ENCODE measurements at regions of chr6 and their contacts with region 1.

Region 1: GRCh38 chr6:120826253-120826652 is 508.0 kb downstream of the TBC1D32 start:
- DNase-seq: peak; percentile 65
- ATAC-seq: peak; percentile 53
- H3K4me3 ChIP-seq: no peak overlapping the region
- H3K27ac ChIP-seq: no peak overlapping the region
- H3K4me1 ChIP-seq: peaks cover 8% of the 10 kb centered on the region
- H3K27me3 ChIP-seq: no peaks in the 10 kb centered on the region
- CTCF ChIP-seq: peak; percentile 77

Region 2: DNA sequence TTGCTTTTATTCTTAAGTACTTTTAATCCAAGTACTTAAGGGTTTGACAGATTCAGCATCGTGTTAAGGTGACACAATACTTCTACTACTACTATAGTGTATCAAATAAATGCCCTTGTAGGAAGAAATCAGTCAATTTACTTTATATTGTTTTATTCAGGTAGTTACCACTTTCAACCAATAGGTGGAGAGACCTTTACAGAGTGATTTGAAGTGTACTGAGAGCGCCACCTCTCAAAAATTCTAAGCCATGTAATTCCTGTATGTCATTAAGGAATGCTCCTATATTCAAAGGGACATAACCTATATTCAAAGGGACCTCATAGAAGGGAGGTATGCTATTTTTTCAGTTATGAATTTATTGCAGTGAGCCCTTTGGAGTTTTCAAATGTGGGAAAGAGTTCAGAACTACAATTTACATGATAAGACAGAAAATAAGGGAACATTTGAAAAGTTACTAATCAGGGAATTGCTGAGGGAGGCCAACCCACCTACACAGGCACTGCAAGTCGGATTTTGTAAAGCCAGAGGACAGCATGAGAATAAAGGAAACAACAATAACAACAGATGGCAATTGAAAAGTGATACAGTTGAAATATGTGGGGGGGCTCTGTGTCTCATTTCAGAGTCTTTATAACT is 447.6 kb before region 1 on chr6:
- CTCF ChIA-PET with region 1: no interaction called
- POLR2A ChIA-PET with region 1: no interaction called
- intact Hi-C with region 1: loop called (anchors 10 kb)
- DNase-seq: peak; percentile 70
- ATAC-seq: peak; percentile 81
- H3K4me3 ChIP-seq: no peak overlapping the region
- H3K27ac ChIP-seq: no peak overlapping the region
- H3K4me1 ChIP-seq: no peaks in the 10 kb centered on the region
- H3K27me3 ChIP-seq: no peaks in the 10 kb centered on the region
- CTCF ChIP-seq: peak; percentile 92

Region 3: DNA sequence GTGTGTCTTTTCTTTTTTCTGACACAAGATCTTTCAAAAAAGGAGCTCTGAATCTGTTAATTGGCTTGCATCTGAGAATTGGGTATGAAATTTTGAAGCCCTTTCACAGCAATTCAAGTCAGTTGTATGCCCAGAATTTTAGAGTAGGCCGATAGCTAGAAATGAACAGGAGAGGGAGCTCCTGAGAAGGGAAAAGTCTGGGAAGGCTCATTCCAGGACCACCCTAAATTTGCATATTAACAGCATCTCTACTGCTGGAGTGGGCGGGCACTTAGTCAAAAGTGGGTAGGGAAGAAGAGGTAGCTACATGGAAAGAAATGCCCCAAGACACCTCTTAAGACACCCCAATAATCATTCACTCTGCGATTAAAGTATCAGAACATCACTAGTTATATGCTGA is 420.3 kb before region 1 on chr6:
- CTCF ChIA-PET with region 1: no interaction called
- POLR2A ChIA-PET with region 1: no interaction called
- intact Hi-C with region 1: loop called (anchors 1 kb)
- DNase-seq: peak; percentile 33
- ATAC-seq: no peak; the same call in 1 of the 2 replicates
- H3K4me3 ChIP-seq: no peak overlapping the region
- H3K27ac ChIP-seq: no peak overlapping the region
- H3K4me1 ChIP-seq: no peaks in the 10 kb centered on the region
- H3K27me3 ChIP-seq: no peaks in the 10 kb centered on the region
- CTCF ChIP-seq: peak; percentile 61

Measured in PC-3 (cell line).